Heart right ventricle (tissue), 16 donors: ENCODE measurements at regions of chr10 and their contacts with region 1.

Region 1: DNA sequence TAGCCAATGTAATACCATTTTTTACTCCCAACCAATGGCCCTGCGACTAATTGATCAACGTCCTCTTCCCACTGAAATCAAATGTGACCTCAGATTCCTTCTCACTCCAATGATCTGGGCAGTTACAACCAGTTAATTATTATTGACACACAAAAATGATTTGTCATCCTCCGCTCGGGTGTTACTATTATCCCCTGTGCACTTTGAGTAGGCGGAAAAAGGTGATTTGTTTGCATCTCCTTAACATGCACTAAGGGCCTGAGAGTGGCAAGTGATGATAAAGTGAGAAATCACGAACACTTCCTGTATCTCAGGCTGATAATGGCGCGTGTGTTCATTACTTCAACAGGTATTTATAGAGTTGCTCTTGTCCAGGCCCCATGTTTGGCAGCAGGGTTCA is 40.9 kb upstream of the PNLIP start:
- DNase-seq: no peak
- ATAC-seq: no peak
- H3K4me3 ChIP-seq: no peak overlapping the region
- H3K27ac ChIP-seq: no peak overlapping the region
- H3K4me1 ChIP-seq: no peaks in the 10 kb centered on the region
- H3K27me3 ChIP-seq: no peaks in the 10 kb centered on the region
- CTCF ChIP-seq: no peak

Region 2: DNA sequence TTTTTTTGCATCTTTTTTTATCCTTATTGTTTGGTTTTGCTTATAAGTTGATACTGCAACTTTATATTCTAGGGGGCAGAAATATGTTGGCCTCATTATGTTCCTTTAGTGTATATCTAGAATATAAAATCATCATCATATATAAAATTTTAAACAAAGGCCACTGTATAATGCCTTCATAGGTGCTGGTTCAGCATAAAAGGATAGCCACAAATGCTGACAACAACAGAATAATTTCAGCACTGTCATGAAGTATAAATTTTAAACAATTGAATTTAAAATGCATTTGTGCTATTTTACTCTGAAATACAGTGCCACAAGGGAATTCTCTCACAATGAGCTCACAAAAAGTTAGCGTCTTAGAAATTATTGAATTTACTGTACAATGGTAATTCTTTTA is 1125.7 kb before region 1 on chr10:
- intact Hi-C with region 1: loop called in 1 of 10 experiments (anchors 10 kb)
- DNase-seq: no peak
- ATAC-seq: no peak
- H3K4me3 ChIP-seq: no peak overlapping the region
- H3K27ac ChIP-seq: no peak overlapping the region
- H3K4me1 ChIP-seq: no peaks in the 10 kb centered on the region
- H3K27me3 ChIP-seq: no peaks in the 10 kb centered on the region
- CTCF ChIP-seq: no peak

Region 3: GRCh38 chr10:116080553-116080952 is 424.2 kb before region 1 on chr10:
- intact Hi-C with region 1: no loop called
- DNase-seq: no peak
- ATAC-seq: no peak
- H3K4me3 ChIP-seq: no peak overlapping the region
- H3K27ac ChIP-seq: no peak overlapping the region
- H3K4me1 ChIP-seq: no peaks in the 10 kb centered on the region
- H3K27me3 ChIP-seq: no peaks in the 10 kb centered on the region
- CTCF ChIP-seq: no peak

Region 4: GRCh38 chr10:116316533-116316932 is 188.3 kb before region 1 on chr10:
- intact Hi-C with region 1: no loop called
- DNase-seq: no peak
- ATAC-seq: no peak
- H3K4me3 ChIP-seq: no peak overlapping the region
- H3K27ac ChIP-seq: no peak overlapping the region
- H3K4me1 ChIP-seq: no peaks in the 10 kb centered on the region
- H3K27me3 ChIP-seq: no peaks in the 10 kb centered on the region
- CTCF ChIP-seq: no peak